Psoas muscle (tissue), 8 donors: ENCODE measurements at regions of chr14 and their contacts with region 1.

Region 1: GRCh38 chr14:55579724-55580469 is at the start of gene KTN1:
- DNase-seq: peak; percentile 89 to 92
- ATAC-seq: peak; percentile 86 to 92 (median 86)
- H3K4me3 ChIP-seq: peak within 1 kb of the TSS; percentile 88
- H3K27ac ChIP-seq: peak within 1 kb of the TSS; percentile 99
- H3K4me1 ChIP-seq: peaks cover 38% of the 10 kb centered on the region
- H3K27me3 ChIP-seq: no peaks in the 10 kb centered on the region
- CTCF ChIP-seq: no peak
- total RNA-seq, gene KTN1: 238 to 607 (median 348) TPM

Region 2: DNA sequence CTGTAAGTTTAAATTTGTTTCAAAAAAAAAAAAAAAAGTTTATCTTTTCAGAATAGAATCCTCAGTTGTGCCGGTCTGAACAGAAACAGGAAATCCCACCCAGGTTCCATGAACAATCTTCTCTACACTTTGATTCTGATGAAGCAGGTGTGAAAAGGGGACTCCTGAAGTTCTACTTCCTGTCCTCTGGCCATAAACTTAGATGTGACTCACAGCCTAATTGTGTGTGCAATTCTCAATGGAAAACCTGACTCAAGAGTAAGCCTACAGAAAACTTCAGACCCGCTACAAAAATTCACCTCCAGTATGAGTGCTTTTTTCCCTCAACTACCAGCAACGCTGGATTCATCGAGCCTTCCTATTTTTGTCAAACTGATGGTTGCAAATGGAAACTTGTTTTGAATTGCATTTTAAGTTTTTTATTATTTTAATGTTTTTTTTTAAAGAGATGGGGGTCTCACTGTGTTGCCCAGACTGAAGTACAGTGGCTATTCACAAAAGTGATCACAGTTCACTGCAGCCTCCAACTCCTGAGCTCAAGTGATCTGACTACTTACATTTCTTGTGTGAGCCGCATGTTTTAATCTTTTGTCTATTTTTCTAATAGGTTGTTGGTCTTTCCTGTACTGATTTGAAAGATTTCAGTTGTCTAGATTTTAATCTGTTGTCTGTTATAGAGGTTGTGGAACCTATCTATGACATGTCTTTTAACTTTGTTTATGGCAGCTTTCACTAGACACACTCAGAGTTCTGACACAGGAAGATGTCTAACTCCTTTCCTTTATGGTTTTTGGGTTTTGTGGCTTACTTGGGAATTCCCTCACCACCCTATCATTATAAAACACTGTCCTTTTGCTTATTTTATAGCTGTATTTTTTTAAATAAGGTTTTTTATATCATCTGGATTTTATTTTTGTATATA is 205.9 kb before region 1 on chr14:
- intact Hi-C with region 1: no loop called
- DNase-seq: no peak
- ATAC-seq: peak; percentile 52 to 74 (median 60)
- H3K4me3 ChIP-seq: no peak overlapping the region
- H3K27ac ChIP-seq: peak overlapping the region; percentile 55
- H3K4me1 ChIP-seq: no peaks in the 10 kb centered on the region
- H3K27me3 ChIP-seq: no peaks in the 10 kb centered on the region
- CTCF ChIP-seq: no peak

Region 3: DNA sequence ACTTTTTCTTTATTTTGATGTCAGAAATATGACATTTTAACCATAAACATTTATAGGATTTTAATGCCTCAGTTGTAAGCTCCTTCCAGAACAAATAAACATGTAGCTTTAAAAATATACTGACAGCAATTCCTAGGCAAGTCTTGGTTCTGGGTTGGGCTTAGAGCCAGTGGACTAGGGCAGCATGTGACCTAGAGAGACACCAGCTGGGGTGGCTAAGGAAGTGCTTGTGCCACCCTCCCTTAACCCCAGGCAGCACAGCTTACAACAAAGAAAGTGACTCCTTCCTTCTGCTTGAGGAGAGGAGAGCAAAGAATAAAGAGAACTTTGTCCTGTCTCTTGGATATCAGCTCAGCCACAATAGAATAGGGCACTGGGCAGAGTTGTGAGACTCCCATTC is 61.5 kb before region 1 on chr14:
- intact Hi-C with region 1: no loop called
- DNase-seq: no peak
- ATAC-seq: no peak
- H3K4me3 ChIP-seq: no peak overlapping the region
- H3K27ac ChIP-seq: no peak overlapping the region
- H3K4me1 ChIP-seq: peaks cover 3% of the 10 kb centered on the region
- H3K27me3 ChIP-seq: no peaks in the 10 kb centered on the region
- CTCF ChIP-seq: no peak

Region 4: GRCh38 chr14:55654243-55654642 is 74.3 kb after region 1 on chr14:
- intact Hi-C with region 1: loop called in 1 of 2 experiments (anchors 5 kb)
- DNase-seq: no peak
- ATAC-seq: no peak
- H3K4me3 ChIP-seq: no peak overlapping the region
- H3K27ac ChIP-seq: no peak overlapping the region
- H3K4me1 ChIP-seq: no peaks in the 10 kb centered on the region
- H3K27me3 ChIP-seq: no peaks in the 10 kb centered on the region
- CTCF ChIP-seq: no peak

Region 5: DNA sequence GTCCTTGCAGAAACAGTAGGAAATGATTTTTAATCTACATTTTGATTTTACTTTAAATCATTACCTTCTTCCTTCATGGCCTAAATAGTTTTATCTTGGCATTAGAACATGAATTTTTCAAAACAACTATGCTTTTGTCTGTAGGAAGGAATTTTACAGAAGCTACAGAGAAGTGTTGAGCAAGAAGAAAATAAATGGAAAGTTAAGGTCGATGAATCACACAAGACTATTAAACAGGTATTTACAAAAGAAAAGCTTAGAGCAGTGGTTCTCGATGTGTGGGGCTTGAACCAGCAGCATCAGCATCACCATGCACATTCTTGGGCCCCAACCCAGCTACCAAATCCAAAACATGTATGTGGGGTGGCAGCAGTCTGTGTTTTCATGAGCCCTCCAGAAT is 91.7 kb after region 1 on chr14:
- intact Hi-C with region 1: loop called in 1 of 2 experiments (anchors 10 kb)
- DNase-seq: no peak
- ATAC-seq: no peak
- H3K4me3 ChIP-seq: no peak overlapping the region
- H3K27ac ChIP-seq: no peak overlapping the region
- H3K4me1 ChIP-seq: peaks cover 32% of the 10 kb centered on the region
- H3K27me3 ChIP-seq: no peaks in the 10 kb centered on the region
- CTCF ChIP-seq: no peak

Region 6: DNA sequence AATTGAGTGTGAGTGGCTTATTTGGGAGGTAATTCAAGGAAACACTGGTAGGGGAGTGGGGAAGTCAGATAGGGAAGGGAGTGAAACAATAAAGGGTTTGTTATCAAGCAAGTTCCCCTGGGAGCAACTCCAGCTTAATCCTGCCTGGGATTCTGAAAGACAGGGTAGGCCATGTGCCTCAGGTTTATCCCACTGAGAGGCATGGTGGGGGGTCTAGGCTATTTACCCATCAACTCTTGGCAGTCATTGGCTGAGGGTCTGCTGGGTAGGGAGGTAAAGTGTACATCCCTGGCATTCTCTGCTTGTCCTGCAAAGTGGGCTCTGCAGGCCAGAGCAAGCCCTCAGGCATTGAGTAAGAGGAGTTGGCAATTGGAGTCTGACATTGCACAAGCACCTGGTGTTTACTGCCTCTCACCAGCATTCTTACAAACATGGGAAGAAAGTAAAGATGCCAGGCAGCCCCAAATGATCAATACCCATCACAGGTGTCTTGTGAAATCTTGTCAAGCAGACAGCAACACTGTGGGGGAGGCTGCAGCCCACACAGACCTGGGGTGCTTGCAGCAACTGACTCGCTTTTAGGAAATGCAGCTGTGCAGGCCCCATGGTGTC is 169.4 kb after region 1 on chr14:
- intact Hi-C with region 1: no loop called
- DNase-seq: no peak
- ATAC-seq: no peak
- H3K4me3 ChIP-seq: no peak overlapping the region
- H3K27ac ChIP-seq: no peak overlapping the region
- H3K4me1 ChIP-seq: no peaks in the 10 kb centered on the region
- H3K27me3 ChIP-seq: no peaks in the 10 kb centered on the region
- CTCF ChIP-seq: no peak